AG04449 (cell line): ENCODE measurements at regions of chr17 and their contacts with region 1.

Region 1: DNA sequence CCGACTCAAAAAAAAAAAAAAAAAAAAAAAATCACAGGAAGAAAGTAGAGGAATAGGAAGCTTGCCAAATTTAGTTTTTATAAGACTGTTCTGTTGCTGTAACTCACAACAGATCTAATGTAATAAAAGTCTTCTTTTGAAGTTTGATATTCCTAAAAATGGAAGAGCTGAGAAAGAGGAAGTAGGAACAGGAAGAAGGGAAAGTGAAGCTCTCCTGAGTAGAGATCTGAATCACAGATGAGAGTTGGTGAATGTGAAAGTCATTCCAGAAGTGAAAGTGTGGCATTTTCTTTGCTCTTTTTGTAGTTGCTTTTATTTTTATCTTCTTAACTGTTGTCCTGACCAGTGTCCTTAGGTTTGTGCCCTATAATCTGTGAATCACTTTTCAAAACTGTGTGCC is 2.1 kb downstream of the NMT1 start:
- DNase-seq: no peak
- H3K4me3 ChIP-seq: no peak overlapping the region
- CTCF ChIP-seq: no peak

Region 2: DNA sequence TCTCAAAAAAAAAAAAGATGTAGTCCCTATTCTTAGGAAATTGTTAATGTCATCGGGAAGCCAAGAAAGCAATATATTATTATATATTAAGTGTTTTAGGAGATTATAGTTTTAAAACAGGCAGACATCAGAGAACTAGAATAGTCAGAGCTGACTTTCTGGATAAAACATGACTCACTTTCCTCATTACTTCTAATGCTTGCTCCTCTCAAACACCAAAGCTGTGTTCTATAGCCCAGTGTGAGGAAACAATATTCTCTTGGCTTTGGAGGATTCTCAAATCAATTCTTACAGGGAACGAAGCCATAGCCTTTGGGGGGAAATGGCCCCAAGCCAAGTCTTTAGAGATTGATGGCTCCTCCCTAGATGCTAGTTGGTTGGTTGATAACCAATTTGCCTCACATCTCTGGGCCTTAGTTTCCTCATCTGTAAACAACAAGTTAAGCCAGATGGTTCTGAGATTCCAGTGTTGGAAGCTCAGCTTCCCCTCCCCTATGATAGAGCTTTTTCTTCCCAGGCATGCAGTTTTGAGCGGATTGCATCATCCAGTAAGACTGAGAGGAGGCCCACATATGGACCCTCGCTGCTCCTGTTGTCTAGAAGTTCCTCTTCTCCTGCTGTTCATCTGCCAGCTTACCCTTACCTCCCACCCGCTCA is 10.3 kb after region 1 on chr17:
- CTCF ChIA-PET with region 1: interaction called, 11 read pairs
- POLR2A ChIA-PET with region 1: interaction called, 7 read pairs
- DNase-seq: peak; percentile 77
- H3K4me3 ChIP-seq: no peak overlapping the region
- CTCF ChIP-seq: no peak